T-cell (primary cell): ENCODE measurements at regions of chr18 and their contacts with region 1.

Region 1: DNA sequence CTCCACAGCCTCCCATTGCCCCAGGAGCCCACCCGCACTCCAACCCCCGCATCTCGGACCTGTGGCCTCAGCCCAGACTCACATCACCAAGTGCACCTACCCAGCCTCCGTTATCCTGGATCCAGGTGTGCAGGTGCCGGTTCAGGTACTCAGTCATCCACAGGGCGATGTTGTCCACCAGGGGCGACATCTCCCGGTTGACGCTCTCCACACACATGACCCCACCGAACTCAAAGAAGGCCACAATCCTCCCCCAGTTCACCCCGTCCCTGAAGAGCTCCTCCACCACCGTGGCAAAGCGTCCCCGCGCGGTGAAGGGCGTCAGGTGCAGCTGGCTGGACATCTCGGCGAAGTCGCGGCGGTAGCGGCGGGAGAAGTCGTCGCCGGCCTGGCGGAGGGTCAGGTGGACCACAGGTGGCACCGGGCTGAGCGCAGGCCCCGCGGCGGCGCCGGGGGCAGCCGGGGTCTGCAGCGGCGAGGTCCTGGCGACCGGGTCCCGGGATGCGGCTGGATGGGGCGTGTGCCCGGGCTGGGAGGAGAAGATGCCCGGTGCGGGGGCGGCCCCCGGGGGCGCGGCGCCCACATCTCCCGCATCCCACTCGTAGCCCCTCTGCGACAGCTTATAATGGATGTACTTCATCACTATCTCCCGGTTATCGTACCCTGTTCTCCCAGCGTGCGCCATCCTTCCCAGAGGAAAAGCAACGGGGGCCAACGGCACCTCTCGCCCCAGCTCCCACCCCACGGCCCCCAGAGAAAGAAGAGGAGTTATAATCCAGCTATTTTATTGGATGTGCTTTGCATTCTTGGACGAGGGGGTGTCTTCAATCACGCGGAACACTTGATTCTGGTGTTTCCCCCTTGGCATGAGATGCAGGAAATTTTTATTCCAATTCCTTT is 1.3 kb downstream of the BCL2 start:
- DNase-seq: peak; percentile 55 to 88 (median 75)
- ATAC-seq: peak; percentile 46 to 56 (median 48)
- H3K4me3 ChIP-seq: peak overlapping the region; percentile 95 to 96
- H3K4me3 Mint-ChIP-seq: peak overlapping the region; percentile 99 to 100 (median 99)
- H3K27ac ChIP-seq: peak overlapping the region; percentile 57
- H3K27ac Mint-ChIP-seq: peak overlapping the region; percentile 97
- H3K4me1 ChIP-seq: peaks cover 30 to 41% of the 10 kb centered on the region in 2 experiments
- H3K4me1 Mint-ChIP-seq: peaks cover 60 to 69% (median 67%) of the 10 kb centered on the region in 3 donors
- H3K27me3 ChIP-seq: no peaks in the 10 kb centered on the region
- H3K27me3 Mint-ChIP-seq: no peaks in the 10 kb centered on the region

Region 2: DNA sequence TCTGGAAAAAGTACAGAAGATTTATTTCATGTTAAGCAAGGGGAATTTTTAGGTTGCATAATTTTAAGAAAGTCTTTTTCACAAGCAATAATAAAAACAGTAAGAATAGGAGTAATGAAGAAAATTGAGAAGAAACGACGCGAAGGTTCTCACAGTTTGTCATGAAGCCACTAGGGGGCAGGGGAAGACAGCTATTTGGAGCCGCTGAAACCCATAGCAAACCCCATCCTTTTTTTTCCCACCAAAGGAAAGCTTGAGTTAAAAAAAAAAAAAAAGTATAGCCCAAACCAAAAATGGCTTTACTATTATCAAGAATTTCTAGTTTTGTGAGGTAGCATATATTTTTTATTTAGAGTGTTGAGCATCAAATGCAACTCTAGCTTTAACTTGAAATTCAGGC is 302.0 kb before region 1 on chr18:
- CTCF ChIA-PET with region 1: interaction called, 58 to 60 read pairs
- POLR2A ChIA-PET with region 1: no interaction called
- DNase-seq: peak in 30 of 35 experiments; percentile 9 to 80 (median 33)
- ATAC-seq: peak in 3 of 4 experiments; percentile 54 to 77 (median 65)
- H3K4me3 ChIP-seq: no peak overlapping the region
- H3K4me3 Mint-ChIP-seq: no peak overlapping the region
- H3K27ac ChIP-seq: no peak overlapping the region
- H3K27ac Mint-ChIP-seq: no peak overlapping the region
- H3K4me1 ChIP-seq: no peaks in the 10 kb centered on the region
- H3K4me1 Mint-ChIP-seq: no peaks in the 10 kb centered on the region
- H3K27me3 ChIP-seq: peaks cover 0 to 7% of the 10 kb centered on the region in 2 experiments
- H3K27me3 Mint-ChIP-seq: peaks cover 13 to 28% of the 10 kb centered on the region in 2 donors

Region 3: DNA sequence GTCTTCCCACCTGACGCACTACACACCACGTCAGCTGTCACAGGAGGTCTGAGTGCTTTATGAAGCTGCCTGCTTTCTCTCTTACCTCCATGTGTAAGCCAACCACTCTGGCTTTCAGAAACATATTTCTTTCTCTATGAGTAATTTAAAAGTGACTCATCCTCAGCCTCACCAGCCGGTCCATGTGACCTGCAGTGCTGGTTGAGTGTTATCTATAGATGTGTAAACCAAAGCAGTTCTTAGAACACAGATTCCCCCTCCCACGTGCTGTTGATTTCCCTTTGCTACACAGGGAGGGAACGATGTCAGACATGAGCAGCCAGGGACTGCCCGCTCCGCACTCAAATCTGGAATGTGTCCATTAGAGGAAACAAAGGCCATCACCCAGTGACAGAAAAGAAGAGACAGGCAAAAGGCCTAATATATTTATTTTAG is 156.5 kb before region 1 on chr18:
- CTCF ChIA-PET with region 1: interaction called, 9 to 12 read pairs
- POLR2A ChIA-PET with region 1: interaction called, 3 to 5 read pairs
- DNase-seq: peak; percentile 46 to 90 (median 76)
- ATAC-seq: peak; percentile 83 to 90 (median 86)
- H3K4me3 ChIP-seq: peak overlapping the region in 1 of 2 donors; percentile 36
- H3K4me3 Mint-ChIP-seq: peak overlapping the region; percentile 73 to 78 (median 75)
- H3K27ac ChIP-seq: peak overlapping the region; percentile 100
- H3K27ac Mint-ChIP-seq: peak overlapping the region; percentile 99 to 100
- H3K4me1 ChIP-seq: peaks cover 41 to 65% of the 10 kb centered on the region in 2 experiments
- H3K4me1 Mint-ChIP-seq: peaks cover 94 to 95% (median 95%) of the 10 kb centered on the region in 3 donors
- H3K27me3 ChIP-seq: no peaks in the 10 kb centered on the region
- H3K27me3 Mint-ChIP-seq: no peaks in the 10 kb centered on the region

Region 4: GRCh38 chr18:63292831-63293683 is 25.2 kb before region 1 on chr18:
- CTCF ChIA-PET with region 1: interaction called, 4 to 11 read pairs
- POLR2A ChIA-PET with region 1: interaction called in 1 of 2 experiments, 4 read pairs
- DNase-seq: peak in 12 of 35 experiments; percentile 3 to 35 (median 11)
- ATAC-seq: peak; percentile 34 to 63 (median 52)
- H3K4me3 ChIP-seq: no peak overlapping the region
- H3K4me3 Mint-ChIP-seq: peak overlapping the region in 2 of 3 donors; percentile 29 to 60
- H3K27ac ChIP-seq: peak overlapping the region; percentile 8
- H3K27ac Mint-ChIP-seq: no peak overlapping the region
- H3K4me1 ChIP-seq: peaks cover 34 to 42% of the 10 kb centered on the region in 2 experiments
- H3K4me1 Mint-ChIP-seq: peaks cover 9 to 59% (median 17%) of the 10 kb centered on the region in 3 donors
- H3K27me3 ChIP-seq: no peaks in the 10 kb centered on the region
- H3K27me3 Mint-ChIP-seq: no peaks in the 10 kb centered on the region

Region 5: GRCh38 chr18:63307551-63308200 is 10.6 kb before region 1 on chr18:
- CTCF ChIA-PET with region 1: interaction called, 4 to 15 read pairs
- POLR2A ChIA-PET with region 1: no interaction called
- DNase-seq: no peak
- ATAC-seq: no peak
- H3K4me3 ChIP-seq: no peak overlapping the region
- H3K4me3 Mint-ChIP-seq: no peak overlapping the region
- H3K27ac ChIP-seq: no peak overlapping the region
- H3K27ac Mint-ChIP-seq: peak overlapping the region; percentile 55 to 90
- H3K4me1 ChIP-seq: peaks cover 21 to 46% of the 10 kb centered on the region in 2 experiments
- H3K4me1 Mint-ChIP-seq: peaks cover 88 to 94% (median 92%) of the 10 kb centered on the region in 3 donors
- H3K27me3 ChIP-seq: no peaks in the 10 kb centered on the region
- H3K27me3 Mint-ChIP-seq: no peaks in the 10 kb centered on the region

Region 6: GRCh38 chr18:63378919-63379638 is 60.8 kb after region 1 on chr18:
- CTCF ChIA-PET with region 1: no interaction called
- POLR2A ChIA-PET with region 1: no interaction called
- DNase-seq: no peak
- ATAC-seq: no peak
- H3K4me3 ChIP-seq: no peak overlapping the region
- H3K4me3 Mint-ChIP-seq: peak overlapping the region in 2 of 3 donors; percentile 6 to 29
- H3K27ac ChIP-seq: no peak overlapping the region
- H3K27ac Mint-ChIP-seq: peak overlapping the region; percentile 71 to 89
- H3K4me1 ChIP-seq: no peaks in the 10 kb centered on the region
- H3K4me1 Mint-ChIP-seq: peaks cover 11 to 23% (median 13%) of the 10 kb centered on the region in 3 donors
- H3K27me3 ChIP-seq: no peaks in the 10 kb centered on the region
- H3K27me3 Mint-ChIP-seq: no peaks in the 10 kb centered on the region